ENCODE measurements at regions of chr11 and their contacts with region 1.

Region 1: GRCh38 chr11:124837491-124837856 is 27.8 kb upstream of the ROBO3 start:
- DNase-seq: peak; percentile 19
- ATAC-seq: peak; percentile 69
- H3K4me3 Mint-ChIP-seq: no peak overlapping the region
- H3K27ac Mint-ChIP-seq: no peak overlapping the region
- H3K4me1 Mint-ChIP-seq: peaks cover 15% of the 10 kb centered on the region
- H3K27me3 Mint-ChIP-seq: peaks cover 49% of the 10 kb centered on the region
- CTCF ChIP-seq: peak; percentile 32

Region 2: GRCh38 chr11:124673333-124674167 is 163.9 kb before region 1 on chr11 and contains the starts of genes SIAE and SPA17:
- CTCF ChIA-PET with region 1: interaction called, 62 read pairs
- POLR2A ChIA-PET with region 1: interaction called, 3 read pairs
- intact Hi-C with region 1: loop called (anchors 1 kb)
- DNase-seq: peak; percentile 91
- ATAC-seq: peak; percentile 89
- H3K4me3 Mint-ChIP-seq: peak within 1 kb of the TSS; percentile 88
- H3K27ac Mint-ChIP-seq: peak within 1 kb of the TSS; percentile 90
- H3K4me1 Mint-ChIP-seq: peaks cover 30% of the 10 kb centered on the region
- H3K27me3 Mint-ChIP-seq: no peaks in the 10 kb centered on the region
- CTCF ChIP-seq: no peak
- total RNA-seq, gene SIAE: 5.0 to 6.2 TPM
- total RNA-seq, gene SPA17: 3.1 to 3.6 TPM

Region 3: DNA sequence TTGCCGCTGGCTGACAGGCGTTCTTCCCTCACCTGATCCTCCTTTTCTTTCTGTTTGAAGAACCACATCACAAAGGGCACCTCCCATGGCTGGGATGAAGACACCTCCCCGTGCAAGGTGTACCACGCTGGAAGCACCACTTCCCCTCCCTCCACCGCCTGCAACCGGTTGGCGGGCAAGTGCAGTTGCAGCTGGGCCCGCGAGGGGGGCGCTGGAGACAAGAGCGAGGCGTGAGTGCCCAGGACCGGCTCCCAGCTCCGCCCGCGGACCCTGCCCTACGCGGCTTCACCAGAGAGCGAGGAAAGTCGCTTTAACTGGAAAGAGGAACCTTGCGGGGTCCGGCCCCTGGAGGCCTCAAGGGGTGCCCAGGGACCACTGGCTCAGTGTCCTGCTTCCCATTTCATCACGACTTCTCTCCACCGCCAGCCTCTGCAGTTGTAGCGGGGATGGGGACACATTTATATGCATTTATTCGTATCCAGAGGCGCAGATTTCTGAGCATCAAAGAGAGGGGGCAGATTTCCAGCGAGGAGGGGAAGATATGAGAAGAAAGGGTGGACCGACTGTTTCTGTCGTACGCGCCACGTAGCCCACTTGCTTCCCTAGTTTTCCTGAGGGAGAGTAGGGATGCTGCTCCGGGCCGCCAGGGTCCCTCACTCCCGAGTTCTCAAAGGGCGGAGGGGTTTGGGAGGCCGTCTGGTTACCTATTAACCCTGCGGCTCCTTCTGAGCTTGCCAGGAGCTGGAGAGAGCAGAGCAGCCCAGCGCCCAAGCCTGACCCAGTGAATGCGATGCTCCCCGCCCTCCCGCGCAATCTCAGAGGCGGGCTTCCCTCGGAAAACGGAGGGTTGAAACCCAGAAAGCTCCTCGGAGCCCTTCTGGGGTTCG is 78.9 kb before region 1 on chr11:
- CTCF ChIA-PET with region 1: interaction called, 40 read pairs
- POLR2A ChIA-PET with region 1: no interaction called
- intact Hi-C with region 1: loop called (anchors 5 kb)
- DNase-seq: peak; percentile 78
- ATAC-seq: peak; percentile 81
- H3K4me3 Mint-ChIP-seq: peak overlapping the region; percentile 62
- H3K27ac Mint-ChIP-seq: no peak overlapping the region
- H3K4me1 Mint-ChIP-seq: peaks cover 24% of the 10 kb centered on the region
- H3K27me3 Mint-ChIP-seq: peaks cover 43% of the 10 kb centered on the region
- CTCF ChIP-seq: peak; percentile 85

Region 4: DNA sequence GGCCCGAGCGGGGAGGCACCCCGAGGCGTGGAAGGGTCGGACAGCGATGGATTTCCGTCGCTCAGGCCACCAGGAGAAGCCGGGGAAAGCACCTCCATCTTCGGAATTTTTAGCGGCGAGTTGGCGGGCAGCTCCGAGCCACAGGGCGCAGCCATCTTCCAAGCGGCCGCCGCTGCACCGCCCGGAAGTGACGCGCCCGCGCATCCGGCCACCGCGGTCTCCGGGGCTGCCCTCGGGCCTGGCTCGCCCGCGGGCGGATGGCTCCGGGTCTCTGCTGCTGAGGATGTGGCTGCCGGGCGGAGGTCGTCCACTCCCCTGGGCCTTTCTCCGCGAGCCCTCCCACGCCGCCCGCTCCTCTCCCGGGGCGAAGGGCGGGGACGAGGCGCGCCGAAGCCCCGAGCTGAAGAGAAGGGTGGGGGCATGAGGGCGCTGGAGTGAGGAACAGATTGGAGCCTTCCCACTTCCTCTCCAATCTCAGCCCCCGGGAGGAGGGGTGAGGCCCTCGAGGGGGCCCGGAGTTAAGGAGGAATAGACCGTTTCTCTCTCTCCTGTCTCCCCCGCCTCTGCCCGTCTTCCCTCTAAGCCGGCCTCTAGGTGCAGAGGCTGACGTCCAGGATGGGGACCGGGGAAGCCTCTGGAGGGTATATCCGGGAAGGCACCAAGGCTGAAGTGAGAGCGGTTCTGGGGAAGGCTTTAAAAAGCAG is 37.1 kb before region 1 on chr11 and contains the start of gene MSANTD2:
- CTCF ChIA-PET with region 1: interaction called, 55 read pairs
- POLR2A ChIA-PET with region 1: interaction called, 3 read pairs
- intact Hi-C with region 1: loop called (anchors 1 kb)
- DNase-seq: peak; percentile 83
- ATAC-seq: peak; percentile 89
- H3K4me3 Mint-ChIP-seq: peak within 1 kb of the TSS; percentile 87
- H3K27ac Mint-ChIP-seq: peak within 1 kb of the TSS; percentile 92
- H3K4me1 Mint-ChIP-seq: peaks cover 29% of the 10 kb centered on the region
- H3K27me3 Mint-ChIP-seq: no peaks in the 10 kb centered on the region
- CTCF ChIP-seq: no peak
- total RNA-seq, gene MSANTD2: 5.8 to 7.3 TPM

Region 5: GRCh38 chr11:124855437-124855836 is 18.0 kb after region 1 on chr11:
- CTCF ChIA-PET with region 1: interaction called, 10 read pairs
- POLR2A ChIA-PET with region 1: interaction called, 4 read pairs
- intact Hi-C with region 1: no loop called
- DNase-seq: no peak
- ATAC-seq: no peak
- H3K4me3 Mint-ChIP-seq: no peak overlapping the region
- H3K27ac Mint-ChIP-seq: no peak overlapping the region
- H3K4me1 Mint-ChIP-seq: no peaks in the 10 kb centered on the region
- H3K27me3 Mint-ChIP-seq: peaks cover 8% of the 10 kb centered on the region
- CTCF ChIP-seq: no peak

Region 6: GRCh38 chr11:124875943-124876817 is 38.7 kb after region 1 on chr11:
- CTCF ChIA-PET with region 1: interaction called, 24 read pairs
- POLR2A ChIA-PET with region 1: no interaction called
- intact Hi-C with region 1: no loop called
- DNase-seq: peak; percentile 91
- ATAC-seq: peak; percentile 94
- H3K4me3 Mint-ChIP-seq: peak overlapping the region; percentile 83
- H3K27ac Mint-ChIP-seq: peak overlapping the region; percentile 91
- H3K4me1 Mint-ChIP-seq: peaks cover 16% of the 10 kb centered on the region
- H3K27me3 Mint-ChIP-seq: peaks cover 25% of the 10 kb centered on the region
- CTCF ChIP-seq: peak; percentile 80

Region 7: GRCh38 chr11:125053167-125053566 is 215.7 kb after region 1 on chr11:
- CTCF ChIA-PET with region 1: no interaction called
- POLR2A ChIA-PET with region 1: no interaction called
- intact Hi-C with region 1: no loop called
- DNase-seq: no peak
- ATAC-seq: no peak
- H3K4me3 Mint-ChIP-seq: no peak overlapping the region
- H3K27ac Mint-ChIP-seq: no peak overlapping the region
- H3K4me1 Mint-ChIP-seq: peaks cover 3% of the 10 kb centered on the region
- H3K27me3 Mint-ChIP-seq: peaks cover 1% of the 10 kb centered on the region
- CTCF ChIP-seq: no peak

Measured in activated CD8-positive, alpha-beta T cell treated with anti-CD3 and anti-CD28 coated beads for 36 hours (primary cell).